ENCODE measurements at regions of chr19 and their contacts with region 1.

Region 1: GRCh38 chr19:42132851-42133528 is 744 bp upstream of the POU2F2 start:
- DNase-seq: peak; percentile 88
- H3K4me3 Mint-ChIP-seq: peak overlapping the region; percentile 81
- H3K27ac Mint-ChIP-seq: peak overlapping the region; percentile 85
- H3K4me1 Mint-ChIP-seq: peaks cover 49% of the 10 kb centered on the region
- H3K27me3 Mint-ChIP-seq: no peaks in the 10 kb centered on the region

Region 2: GRCh38 chr19:42108527-42109389 is 24.2 kb before region 1 on chr19:
- CTCF ChIA-PET with region 1: interaction called, 43 read pairs
- POLR2A ChIA-PET with region 1: interaction called, 4 read pairs
- intact Hi-C with region 1: loop called (anchors 1 kb)
- DNase-seq: peak; percentile 94
- H3K4me3 Mint-ChIP-seq: no peak overlapping the region
- H3K27ac Mint-ChIP-seq: no peak overlapping the region
- H3K4me1 Mint-ChIP-seq: peaks cover 55% of the 10 kb centered on the region
- H3K27me3 Mint-ChIP-seq: no peaks in the 10 kb centered on the region

Region 3: GRCh38 chr19:42176990-42177685 is 44.1 kb after region 1 on chr19:
- CTCF ChIA-PET with region 1: interaction called, 16 read pairs
- POLR2A ChIA-PET with region 1: no interaction called
- intact Hi-C with region 1: loop called (anchors 2 kb)
- DNase-seq: peak; percentile 85
- H3K4me3 Mint-ChIP-seq: no peak overlapping the region
- H3K27ac Mint-ChIP-seq: no peak overlapping the region
- H3K4me1 Mint-ChIP-seq: peaks cover 14% of the 10 kb centered on the region
- H3K27me3 Mint-ChIP-seq: peaks cover 11% of the 10 kb centered on the region

Region 4: GRCh38 chr19:42199440-42200115 is 66.6 kb after region 1 on chr19:
- CTCF ChIA-PET with region 1: interaction called, 12 read pairs
- POLR2A ChIA-PET with region 1: interaction called, 3 read pairs
- intact Hi-C with region 1: no loop called
- DNase-seq: peak; percentile 86
- H3K4me3 Mint-ChIP-seq: peak overlapping the region; percentile 65
- H3K27ac Mint-ChIP-seq: peak overlapping the region; percentile 98
- H3K4me1 Mint-ChIP-seq: peaks cover 80% of the 10 kb centered on the region
- H3K27me3 Mint-ChIP-seq: no peaks in the 10 kb centered on the region

Region 5: DNA sequence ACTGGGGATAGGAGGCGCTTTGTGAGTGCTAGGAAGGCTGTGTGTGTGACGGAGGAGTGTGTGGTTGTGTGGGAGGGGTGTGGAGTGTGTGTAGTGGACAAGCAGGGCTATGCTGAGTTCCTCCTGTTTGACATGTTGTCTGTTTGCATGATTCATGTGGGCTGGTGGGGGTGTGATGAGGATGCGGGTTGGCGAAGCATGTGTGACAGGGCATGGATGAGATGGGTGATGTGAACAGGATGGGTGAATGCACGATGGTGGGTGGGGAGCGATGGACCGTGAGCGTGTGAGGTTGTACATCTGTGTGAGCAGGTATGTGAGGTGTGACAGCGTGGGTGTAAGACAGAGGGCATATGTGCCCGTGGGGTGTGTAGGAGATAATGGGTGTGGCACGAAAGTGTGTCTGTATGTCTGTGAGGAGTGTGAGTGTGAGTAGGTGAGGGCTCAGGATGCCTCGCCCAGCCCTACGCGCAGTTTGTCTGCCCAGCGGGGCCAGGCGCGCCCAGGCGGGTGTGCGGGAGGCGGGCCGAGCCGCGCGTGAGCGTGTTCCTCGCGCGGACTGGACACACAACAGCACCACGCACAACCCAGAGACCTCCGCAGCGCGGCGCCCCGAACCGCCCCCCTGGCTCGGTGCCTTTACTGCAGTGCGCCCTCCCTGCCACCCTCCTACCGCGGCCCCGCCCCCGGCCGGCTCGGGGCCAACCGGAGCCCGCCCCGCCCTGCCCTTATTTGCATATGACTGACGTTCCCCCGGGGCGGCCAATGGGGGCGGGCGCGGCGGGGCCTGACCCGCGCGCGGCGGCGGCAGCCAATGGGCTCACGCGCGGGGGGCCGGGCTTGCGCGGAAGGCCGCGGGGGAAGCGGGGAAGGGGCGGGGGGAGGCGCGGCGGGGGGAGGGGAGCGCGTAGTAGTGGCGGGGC is 150.4 kb after region 1 on chr19:
- CTCF ChIA-PET with region 1: interaction called, 12 read pairs
- POLR2A ChIA-PET with region 1: interaction called, 4 read pairs
- intact Hi-C with region 1: loop called (anchors 1 kb)
- DNase-seq: peak; percentile 97
- H3K4me3 Mint-ChIP-seq: no peak overlapping the region
- H3K27ac Mint-ChIP-seq: no peak overlapping the region
- H3K4me1 Mint-ChIP-seq: peaks cover 44% of the 10 kb centered on the region
- H3K27me3 Mint-ChIP-seq: no peaks in the 10 kb centered on the region

Region 6: GRCh38 chr19:42325273-42325895 is 192.4 kb after region 1 on chr19 and contains the start of gene MEGF8:
- CTCF ChIA-PET with region 1: interaction called, 3 read pairs
- POLR2A ChIA-PET with region 1: no interaction called
- intact Hi-C with region 1: loop called (anchors 1 kb)
- DNase-seq: peak; percentile 99
- H3K4me3 Mint-ChIP-seq: peak within 1 kb of the TSS; percentile 79
- H3K27ac Mint-ChIP-seq: peak within 1 kb of the TSS; percentile 32
- H3K4me1 Mint-ChIP-seq: peaks cover 19% of the 10 kb centered on the region
- H3K27me3 Mint-ChIP-seq: peaks cover 13% of the 10 kb centered on the region
- total RNA-seq, gene MEGF8: 6.0 to 7.2 TPM